ENCODE measurements at regions of chr12 and their contacts with region 1.

Region 1: DNA sequence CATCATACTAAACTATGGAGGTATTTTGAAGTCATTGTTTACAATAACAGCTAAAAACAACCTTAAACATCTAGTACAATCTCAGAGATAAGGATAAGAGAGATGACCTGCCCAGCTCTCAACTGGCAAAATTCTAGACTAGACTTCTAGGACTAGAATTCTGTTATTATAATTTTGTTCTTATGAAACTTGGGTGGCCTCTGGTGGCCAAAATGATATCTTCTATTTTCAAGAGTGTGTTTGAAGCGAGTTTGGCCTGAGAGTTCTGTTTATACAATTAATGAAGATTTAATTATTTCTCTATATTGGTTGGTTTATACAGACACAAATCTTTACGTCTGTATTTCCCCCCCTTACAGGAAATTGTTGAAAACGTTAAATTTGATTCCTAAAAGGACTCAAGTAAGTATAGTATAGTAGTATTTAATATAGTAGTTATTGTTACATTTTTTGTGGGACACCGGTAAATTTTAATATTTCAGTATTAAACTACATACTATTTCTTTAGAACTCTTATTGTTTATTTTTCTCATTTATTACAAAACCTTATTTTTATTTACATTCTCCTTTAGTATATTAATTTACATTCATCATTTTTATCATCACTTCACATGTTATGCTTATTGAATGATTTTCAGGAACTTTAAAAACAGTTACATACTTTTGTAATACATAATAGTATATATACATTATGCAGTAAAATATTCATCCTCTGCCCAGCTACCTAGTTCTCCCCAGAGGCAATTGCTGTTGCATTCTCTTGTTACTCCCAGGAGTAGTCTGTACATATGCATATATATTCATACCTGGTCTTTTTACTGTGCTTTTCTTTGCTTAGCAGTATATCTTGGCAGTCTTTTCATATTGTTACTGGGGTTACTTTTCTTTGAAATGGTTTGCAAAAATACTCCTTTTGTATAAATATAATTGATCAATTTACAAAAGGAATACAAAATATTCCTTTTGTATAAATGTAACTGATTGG is 6.6 kb downstream of the PPHLN1 start:
- DNase-seq: no peak
- H3K4me3 ChIP-seq: no peak overlapping the region
- H3K27ac ChIP-seq: no peak overlapping the region
- H3K4me1 ChIP-seq: peaks cover 1 to 39% (median 2%) of the 10 kb centered on the region in 3 donors
- H3K27me3 ChIP-seq: no peaks in the 10 kb centered on the region
- CTCF ChIP-seq: peak; percentile 45 to 72 (median 58)
- POLR2A ChIP-seq: no peak

Region 2: DNA sequence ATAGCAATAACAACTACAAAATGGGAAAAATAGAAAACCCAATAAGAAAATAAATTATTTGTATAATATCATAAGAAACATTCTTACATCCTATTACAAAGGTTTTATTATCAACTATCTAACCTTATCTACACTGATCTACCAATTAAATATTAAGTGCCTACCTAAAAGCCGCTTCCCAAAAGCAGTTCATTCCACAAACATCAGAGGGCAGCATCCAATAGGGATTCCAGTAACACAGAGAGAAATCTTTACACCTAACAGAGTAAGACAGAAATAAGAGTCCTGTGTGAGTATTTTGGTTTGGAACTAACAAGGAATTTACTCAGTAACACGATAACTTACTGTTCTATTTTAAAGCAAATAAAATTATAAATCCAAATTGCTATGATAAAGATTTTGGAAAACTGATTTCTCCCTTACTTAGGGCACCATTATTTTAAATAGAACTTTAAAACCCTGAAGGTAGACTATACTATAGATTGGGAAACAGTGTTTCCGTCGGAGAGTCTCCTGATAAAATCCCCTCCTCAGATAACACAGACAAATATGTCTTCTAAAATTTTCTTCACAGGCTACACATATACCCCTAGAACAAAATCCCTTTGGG is 202.9 kb before region 1 on chr12:
- intact Hi-C with region 1: loop called (anchors 5 kb)
- DNase-seq: no peak
- H3K4me3 ChIP-seq: no peak overlapping the region
- H3K27ac ChIP-seq: no peak overlapping the region
- H3K4me1 ChIP-seq: peaks cover 9 to 50% (median 13%) of the 10 kb centered on the region in 3 donors
- H3K27me3 ChIP-seq: no peaks in the 10 kb centered on the region
- CTCF ChIP-seq: peak; percentile 44 to 87 (median 74)
- POLR2A ChIP-seq: no peak